GM10248 (cell line): ENCODE measurements at regions of chr11 and their contacts with region 1.

Region 1: DNA sequence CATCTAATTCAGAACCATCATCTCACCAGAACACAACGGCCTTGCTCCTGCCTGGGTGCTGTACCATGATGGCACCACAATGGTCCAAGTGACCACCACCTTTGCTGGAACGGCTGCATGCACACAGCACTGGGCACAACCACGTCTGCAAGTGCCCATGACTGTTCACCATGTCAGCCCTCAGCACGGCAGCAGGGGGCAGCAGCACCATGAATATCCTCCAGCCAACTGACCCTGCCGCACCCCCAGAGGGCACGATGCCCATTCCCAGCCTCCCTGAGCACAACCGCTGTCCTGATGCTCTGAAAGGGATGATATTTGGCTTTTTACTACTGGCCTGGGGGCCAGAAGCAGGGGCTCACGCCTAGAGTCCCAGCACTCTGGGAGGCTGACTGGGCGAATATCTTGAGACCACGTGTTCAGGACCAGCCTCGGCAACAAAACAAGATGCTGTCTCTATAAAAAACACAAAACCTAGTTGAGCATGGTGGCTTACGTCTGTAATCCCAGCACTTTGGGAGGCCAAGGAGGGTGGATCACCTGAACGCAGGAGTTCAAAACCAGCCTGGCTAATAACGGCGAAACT is 25.7 kb downstream of the DRD4 start:
- DNase-seq: peak; percentile 75
- CTCF ChIP-seq: peak; percentile 75

Region 2: DNA sequence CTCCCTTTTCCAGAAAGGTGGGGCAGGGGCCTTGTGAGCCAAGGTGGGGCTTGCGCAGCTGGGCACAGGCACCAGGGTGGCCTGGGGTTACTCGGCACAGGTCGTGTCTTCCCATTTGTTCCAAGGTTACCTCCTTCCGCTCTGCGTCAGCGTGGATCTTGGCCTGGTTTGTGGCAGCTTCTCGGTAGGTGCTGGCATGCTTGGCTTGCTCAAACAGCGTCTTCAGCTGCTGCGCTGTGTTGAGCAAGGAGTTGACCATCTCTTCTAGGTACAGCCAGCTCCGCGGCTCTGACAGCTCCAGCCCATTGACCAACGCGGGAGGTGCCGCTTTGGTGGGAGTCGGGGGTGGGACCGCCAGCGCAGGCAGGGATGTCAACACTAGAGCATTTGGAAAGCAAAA is 11.6 kb after region 1 on chr11:
- CTCF ChIA-PET with region 1: interaction called, 10 read pairs
- POLR2A ChIA-PET with region 1: no interaction called
- DNase-seq: no peak
- CTCF ChIP-seq: no peak